ENCODE measurements at regions of chr12 and their contacts with region 1.

Region 1: GRCh38 chr12:95385246-95386035 is 88.5 kb upstream of the METAP2 start:
- DNase-seq: peak; percentile 14
- H3K4me3 ChIP-seq: peak overlapping the region; percentile 4 to 32 (median 4)
- H3K27ac ChIP-seq: no peak overlapping the region
- H3K4me1 ChIP-seq: peaks cover 6% of the 10 kb centered on the region
- H3K27me3 ChIP-seq: no peaks in the 10 kb centered on the region
- CTCF ChIP-seq: no peak

Region 2: GRCh38 chr12:94875525-94875924 is 509.9 kb before region 1 on chr12:
- CTCF ChIA-PET with region 1: no interaction called
- dilution Hi-C with region 1: no loop called
- in situ Hi-C with region 1: no loop called
- intact Hi-C with region 1: no loop called
- DNase-seq: peak; percentile 47
- H3K4me3 ChIP-seq: no peak overlapping the region
- H3K27ac ChIP-seq: no peak overlapping the region
- H3K4me1 ChIP-seq: peaks cover 14% of the 10 kb centered on the region
- H3K27me3 ChIP-seq: peaks cover 24% of the 10 kb centered on the region
- CTCF ChIP-seq: peak in 1 of 2 donors; percentile 37

Region 3: GRCh38 chr12:95343461-95344230 is 41.8 kb before region 1 on chr12:
- CTCF ChIA-PET with region 1: no interaction called
- dilution Hi-C with region 1: loop called (anchors 5 kb)
- in situ Hi-C with region 1: no loop called
- intact Hi-C with region 1: no loop called
- DNase-seq: no peak
- H3K4me3 ChIP-seq: no peak overlapping the region
- H3K27ac ChIP-seq: no peak overlapping the region
- H3K4me1 ChIP-seq: peaks cover 6% of the 10 kb centered on the region
- H3K27me3 ChIP-seq: no peaks in the 10 kb centered on the region
- CTCF ChIP-seq: no peak

Region 4: GRCh38 chr12:95351748-95352147 is 33.7 kb before region 1 on chr12:
- CTCF ChIA-PET with region 1: interaction called, 11 read pairs
- dilution Hi-C with region 1: no loop called
- in situ Hi-C with region 1: no loop called
- intact Hi-C with region 1: no loop called
- DNase-seq: no peak
- H3K4me3 ChIP-seq: no peak overlapping the region
- H3K27ac ChIP-seq: no peak overlapping the region
- H3K4me1 ChIP-seq: no peaks in the 10 kb centered on the region
- H3K27me3 ChIP-seq: no peaks in the 10 kb centered on the region
- CTCF ChIP-seq: no peak

Region 5: DNA sequence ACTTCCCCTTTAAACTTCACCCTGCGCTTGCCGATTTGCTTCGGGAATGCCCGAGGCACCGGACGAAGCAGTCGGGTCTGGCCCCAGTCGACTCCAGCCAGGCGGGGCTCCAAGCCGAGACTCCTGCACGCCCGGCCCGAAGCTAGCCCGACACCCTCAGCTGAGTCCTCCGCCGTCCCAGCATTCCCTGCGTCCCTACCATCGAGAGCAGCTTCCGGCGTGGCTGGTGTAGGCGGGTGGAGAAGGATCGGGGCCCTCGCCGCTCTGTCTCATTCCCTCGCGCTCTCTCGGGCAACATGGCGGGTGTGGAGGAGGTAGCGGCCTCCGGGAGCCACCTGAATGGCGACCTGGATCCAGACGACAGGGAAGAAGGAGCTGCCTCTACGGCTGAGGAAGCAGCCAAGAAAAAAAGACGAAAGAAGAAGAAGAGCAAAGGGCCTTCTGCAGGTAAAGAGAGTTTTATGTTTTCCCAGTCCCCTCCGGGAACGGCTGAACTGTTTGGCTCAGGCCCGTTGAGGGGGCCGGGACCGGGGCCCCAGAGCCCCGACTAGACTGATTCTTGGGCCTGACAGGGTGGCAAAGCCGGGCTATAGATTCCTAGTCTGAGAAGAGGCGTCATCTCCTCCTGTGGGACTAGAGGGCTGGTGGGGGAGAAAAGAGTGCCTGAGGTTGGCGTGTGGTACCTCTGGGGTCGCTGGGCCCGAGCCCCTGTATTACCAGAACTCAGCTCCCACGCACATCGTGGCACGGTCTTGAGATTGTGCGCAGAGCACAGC is 88.6 kb after region 1 on chr12 and contains the start of gene METAP2:
- CTCF ChIA-PET with region 1: no interaction called
- dilution Hi-C with region 1: no loop called
- in situ Hi-C with region 1: no loop called
- intact Hi-C with region 1: loop called (anchors 2 kb)
- DNase-seq: peak; percentile 98
- H3K4me3 ChIP-seq: peak within 1 kb of the TSS; percentile 69 to 99 (median 89)
- H3K27ac ChIP-seq: peak within 1 kb of the TSS; percentile 93
- H3K4me1 ChIP-seq: peaks cover 5% of the 10 kb centered on the region
- H3K27me3 ChIP-seq: no peaks in the 10 kb centered on the region
- CTCF ChIP-seq: no peak
- total RNA-seq, gene METAP2: 42.0 to 89.8 TPM